Activated CD4-positive, alpha-beta T cell treated with anti-CD3 and anti-CD28 coated beads for 36 hours (primary cell): ENCODE measurements at regions of chr3 and their contacts with region 1.

Region 1: DNA sequence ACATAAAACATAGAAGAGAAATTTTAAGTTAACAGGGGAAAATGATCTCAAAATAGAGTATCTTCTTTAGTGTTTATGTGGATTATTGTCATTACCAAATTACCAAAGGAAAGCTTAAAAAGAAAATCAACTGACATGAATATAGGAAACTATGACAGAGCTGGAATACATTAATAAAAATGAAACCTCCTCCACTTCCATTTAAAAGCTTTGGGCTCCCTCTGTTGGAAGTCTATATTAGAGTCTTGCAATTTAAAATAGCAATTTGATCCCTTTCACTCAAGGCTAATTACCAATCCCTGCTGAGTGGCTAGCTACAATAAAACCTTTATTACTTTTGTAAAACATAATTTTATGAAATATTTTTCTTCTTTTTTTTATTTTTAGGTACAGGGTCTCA is 61.4 kb upstream of the IMPG2 start:
- DNase-seq: no peak
- ATAC-seq: no peak
- H3K4me3 Mint-ChIP-seq: no peak overlapping the region
- H3K27ac Mint-ChIP-seq: no peak overlapping the region
- H3K4me1 Mint-ChIP-seq: peaks cover 60% of the 10 kb centered on the region
- H3K27me3 Mint-ChIP-seq: no peaks in the 10 kb centered on the region

Region 2: GRCh38 chr3:100650651-100651611 is 730.9 kb before region 1 on chr3:
- CTCF ChIA-PET with region 1: no interaction called
- POLR2A ChIA-PET with region 1: no interaction called
- intact Hi-C with region 1: loop called in 1 of 2 experiments (anchors 2 kb)
- DNase-seq: peak; percentile 44
- ATAC-seq: peak; percentile 100
- H3K4me3 Mint-ChIP-seq: peak overlapping the region; percentile 52
- H3K27ac Mint-ChIP-seq: peak overlapping the region; percentile 87
- H3K4me1 Mint-ChIP-seq: peaks cover 20% of the 10 kb centered on the region
- H3K27me3 Mint-ChIP-seq: no peaks in the 10 kb centered on the region

Region 3: DNA sequence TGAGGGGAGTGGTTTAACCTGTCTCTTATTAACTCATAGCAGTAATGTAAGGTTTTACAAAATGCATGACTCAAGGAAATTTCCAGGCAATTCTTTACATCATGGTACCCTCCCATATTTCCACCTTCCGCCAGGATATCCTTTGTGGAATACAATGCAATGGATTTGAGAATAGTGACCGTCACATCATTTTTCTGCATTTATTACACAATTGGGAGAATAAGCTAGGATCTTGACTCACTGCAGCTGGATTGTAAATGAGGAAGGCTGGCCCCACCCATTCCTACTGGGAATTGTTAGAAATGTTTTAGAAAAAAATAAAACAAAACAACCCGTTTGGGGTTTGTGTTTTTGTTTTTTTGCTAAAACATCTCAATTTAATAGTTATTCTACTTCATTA is 158.8 kb before region 1 on chr3:
- CTCF ChIA-PET with region 1: interaction called, 3 read pairs
- POLR2A ChIA-PET with region 1: no interaction called
- intact Hi-C with region 1: loop called (anchors 5 kb)
- DNase-seq: no peak
- ATAC-seq: no peak
- H3K4me3 Mint-ChIP-seq: no peak overlapping the region
- H3K27ac Mint-ChIP-seq: no peak overlapping the region
- H3K4me1 Mint-ChIP-seq: peaks cover 16% of the 10 kb centered on the region
- H3K27me3 Mint-ChIP-seq: no peaks in the 10 kb centered on the region

Region 4: DNA sequence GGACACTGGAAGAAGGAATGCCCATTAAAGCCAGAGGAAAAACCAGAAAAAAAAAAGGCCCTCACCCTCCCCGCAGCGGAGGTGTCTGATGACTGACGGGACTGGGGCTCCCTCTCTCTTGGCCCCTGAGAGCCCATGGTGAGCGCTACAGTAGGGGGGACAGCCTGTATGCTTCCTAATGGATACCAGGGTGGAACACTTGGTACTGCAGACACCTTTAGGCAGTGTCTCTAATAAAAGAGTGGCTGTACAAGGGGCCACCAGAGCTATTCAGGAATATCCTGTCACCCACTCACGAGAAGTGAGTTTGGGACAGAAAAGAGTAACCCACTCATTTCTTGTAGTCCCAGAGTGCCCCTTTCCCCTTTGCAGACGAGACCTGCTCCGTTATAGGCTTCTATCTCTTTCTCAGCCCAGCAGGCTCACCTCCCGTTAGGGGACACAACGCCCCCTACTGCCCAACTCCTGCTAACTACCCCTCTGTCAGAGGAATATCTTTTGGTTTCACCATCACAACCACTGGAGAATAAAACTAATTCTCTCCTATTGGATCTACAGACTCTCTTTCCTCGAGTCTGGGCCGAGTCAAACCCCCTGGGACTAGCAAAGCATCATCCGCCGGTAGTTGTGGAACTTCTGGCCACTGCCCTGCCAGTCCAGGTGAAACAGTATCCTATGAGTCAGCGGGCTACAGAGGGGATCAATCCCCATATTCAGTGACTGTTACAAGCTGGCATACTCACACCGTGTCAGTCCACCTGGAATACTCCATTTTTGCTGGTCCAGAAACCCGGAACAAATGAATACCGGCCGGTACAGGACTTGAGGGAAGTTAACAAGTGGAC is 254.4 kb after region 1 on chr3:
- CTCF ChIA-PET with region 1: no interaction called
- POLR2A ChIA-PET with region 1: no interaction called
- intact Hi-C with region 1: loop called (anchors 5 kb)
- DNase-seq: peak; percentile 90
- ATAC-seq: peak; percentile 99
- H3K4me3 Mint-ChIP-seq: no peak overlapping the region
- H3K27ac Mint-ChIP-seq: peak overlapping the region; percentile 33
- H3K4me1 Mint-ChIP-seq: no peaks in the 10 kb centered on the region
- H3K27me3 Mint-ChIP-seq: no peaks in the 10 kb centered on the region